CD4-positive, alpha-beta T cell (primary cell): ENCODE measurements at regions of chr15 and their contacts with region 1.

Region 1: GRCh38 chr15:101258238-101259144 is 6.6 kb upstream of the CHSY1 start:
- DNase-seq: peak in 12 of 14 experiments; percentile 29 to 81 (median 44)
- ATAC-seq: peak; percentile 62
- H3K4me3 ChIP-seq: no peak overlapping the region
- H3K4me3 Mint-ChIP-seq: peak overlapping the region; percentile 25
- H3K27ac ChIP-seq: no peak overlapping the region
- H3K27ac Mint-ChIP-seq: no peak overlapping the region
- H3K4me1 ChIP-seq: no peaks in the 10 kb centered on the region
- H3K4me1 Mint-ChIP-seq: peaks cover 5% of the 10 kb centered on the region
- H3K27me3 ChIP-seq: peaks cover 0 to 5% of the 10 kb centered on the region in 2 experiments
- H3K27me3 Mint-ChIP-seq: peaks cover 26% of the 10 kb centered on the region
- CTCF ChIP-seq: peak; percentile 93

Region 2: GRCh38 chr15:100627789-100628395 is 630.6 kb before region 1 on chr15:
- CTCF ChIA-PET with region 1: no interaction called
- POLR2A ChIA-PET with region 1: no interaction called
- intact Hi-C with region 1: loop called in 1 of 2 experiments (anchors 5 kb)
- DNase-seq: peak; percentile 43 to 85 (median 54)
- ATAC-seq: peak; percentile 92
- H3K4me3 ChIP-seq: no peak overlapping the region
- H3K4me3 Mint-ChIP-seq: no peak overlapping the region
- H3K27ac ChIP-seq: no peak overlapping the region
- H3K27ac Mint-ChIP-seq: no peak overlapping the region
- H3K4me1 ChIP-seq: peaks cover 8% of the 10 kb centered on the region
- H3K4me1 Mint-ChIP-seq: peaks cover 31% of the 10 kb centered on the region
- H3K27me3 ChIP-seq: no peaks in the 10 kb centered on the region
- H3K27me3 Mint-ChIP-seq: no peaks in the 10 kb centered on the region
- CTCF ChIP-seq: peak; percentile 96

Region 3: DNA sequence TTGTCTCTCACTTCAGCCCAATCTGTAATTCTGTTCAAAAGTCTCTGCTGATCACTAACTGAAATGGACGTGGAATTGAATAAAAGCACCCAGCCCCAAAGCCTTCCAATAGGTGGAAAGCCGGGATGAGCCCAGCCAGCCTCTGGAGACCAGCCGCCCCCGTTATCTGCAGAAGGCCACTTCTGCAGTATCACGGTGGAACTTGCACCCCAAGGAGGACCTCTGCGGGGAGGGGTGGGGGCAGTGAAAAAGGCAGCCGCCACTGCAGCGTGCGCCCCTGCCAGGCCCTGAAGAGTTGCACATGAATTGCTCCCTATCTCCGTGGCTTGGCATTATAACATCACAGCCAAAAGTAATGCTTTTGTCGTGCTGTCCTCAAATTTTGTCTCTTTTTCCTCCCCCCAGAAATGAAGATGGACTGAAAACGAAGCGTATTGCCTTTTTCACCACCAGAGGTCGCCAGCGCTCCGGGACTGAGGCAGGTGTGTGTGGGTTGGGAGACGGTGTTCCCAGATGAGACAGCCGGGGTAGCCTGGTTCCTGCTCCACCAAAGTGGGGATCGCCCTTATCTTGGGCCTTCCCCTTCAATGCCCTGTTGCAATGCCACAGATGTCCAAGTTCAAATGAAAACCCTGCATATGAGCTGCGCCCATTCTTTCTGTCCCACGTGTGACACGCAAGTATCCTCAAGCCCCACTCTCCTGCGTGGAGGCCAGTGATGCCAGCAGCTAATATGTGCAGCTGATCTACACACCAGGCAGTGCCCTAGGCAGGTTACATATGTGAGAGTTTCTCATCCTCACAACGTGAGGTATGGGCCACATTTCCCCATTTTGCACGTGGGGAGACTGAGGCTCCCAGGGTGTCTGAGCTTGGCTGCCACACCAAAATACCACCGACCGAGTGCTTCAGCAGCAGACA is 243.3 kb before region 1 on chr15:
- CTCF ChIA-PET with region 1: interaction called, 6 read pairs
- POLR2A ChIA-PET with region 1: no interaction called
- intact Hi-C with region 1: loop called in 1 of 2 experiments (anchors 1 kb)
- DNase-seq: peak; percentile 48 to 78 (median 57)
- ATAC-seq: no peak
- H3K4me3 ChIP-seq: no peak overlapping the region
- H3K4me3 Mint-ChIP-seq: no peak overlapping the region
- H3K27ac ChIP-seq: no peak overlapping the region
- H3K27ac Mint-ChIP-seq: no peak overlapping the region
- H3K4me1 ChIP-seq: no peaks in the 10 kb centered on the region
- H3K4me1 Mint-ChIP-seq: no peaks in the 10 kb centered on the region
- H3K27me3 ChIP-seq: no peaks in the 10 kb centered on the region
- H3K27me3 Mint-ChIP-seq: no peaks in the 10 kb centered on the region
- CTCF ChIP-seq: peak; percentile 75

Region 4: GRCh38 chr15:101088788-101089583 is 169.5 kb before region 1 on chr15:
- CTCF ChIA-PET with region 1: interaction called, 9 read pairs
- POLR2A ChIA-PET with region 1: no interaction called
- intact Hi-C with region 1: loop called (anchors 1 kb)
- DNase-seq: peak; percentile 49 to 88 (median 76)
- ATAC-seq: peak; percentile 96
- H3K4me3 ChIP-seq: no peak overlapping the region
- H3K4me3 Mint-ChIP-seq: no peak overlapping the region
- H3K27ac ChIP-seq: no peak overlapping the region
- H3K27ac Mint-ChIP-seq: no peak overlapping the region
- H3K4me1 ChIP-seq: peaks cover 7% of the 10 kb centered on the region
- H3K4me1 Mint-ChIP-seq: no peaks in the 10 kb centered on the region
- H3K27me3 ChIP-seq: peaks cover 0 to 5% of the 10 kb centered on the region in 2 experiments
- H3K27me3 Mint-ChIP-seq: no peaks in the 10 kb centered on the region
- CTCF ChIP-seq: peak; percentile 91